Adrenal gland (tissue), 19 donors: ENCODE measurements at regions of chr15 and their contacts with region 1.

Region 1: GRCh38 chr15:64681424-64682024 is 93.9 kb downstream of the RBPMS2 start:
- DNase-seq: peak; percentile 50 to 80 (median 65)
- H3K4me3 ChIP-seq: no peak overlapping the region
- H3K27ac ChIP-seq: no peak overlapping the region
- H3K4me1 ChIP-seq: no peaks in the 10 kb centered on the region
- H3K27me3 ChIP-seq: no peaks in the 10 kb centered on the region
- CTCF ChIP-seq: peak; percentile 60 to 96 (median 86)
- POLR2A ChIP-seq: no peak

Region 2: DNA sequence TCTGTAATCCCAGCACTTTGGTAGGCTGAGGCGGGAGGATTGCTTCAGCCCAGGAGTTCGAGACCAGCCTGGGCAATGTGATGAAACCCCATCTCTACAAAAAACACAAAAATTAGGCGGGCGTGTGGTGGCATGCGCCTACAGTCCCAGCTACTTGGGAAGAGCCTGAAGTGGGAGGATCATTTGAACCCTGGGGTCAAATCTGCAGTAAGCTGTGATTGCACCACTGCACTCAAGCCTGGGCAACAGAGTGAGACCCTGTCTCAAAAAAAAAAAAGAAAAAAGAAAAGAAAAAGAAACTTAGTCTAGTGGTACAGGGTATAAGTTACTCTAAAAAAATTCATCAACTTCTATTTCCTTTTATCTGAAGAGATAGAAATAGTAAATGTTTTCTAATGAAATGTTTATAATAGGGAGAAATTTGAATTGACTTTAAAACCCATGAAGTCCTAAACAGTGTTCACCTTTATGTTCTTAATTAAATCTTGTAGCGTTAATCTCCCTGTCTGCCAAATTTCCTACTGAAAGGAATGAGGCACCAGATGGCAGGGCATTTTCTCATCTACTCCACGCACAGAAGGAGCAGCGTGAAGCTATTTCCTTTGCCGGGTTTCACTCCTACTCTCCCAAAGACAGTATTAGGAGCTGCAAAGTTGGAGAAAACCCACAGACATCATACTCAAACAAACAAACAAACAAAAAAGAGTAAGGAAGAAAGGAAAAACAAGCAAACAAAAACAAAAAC is 302.1 kb before region 1 on chr15:
- intact Hi-C with region 1: no loop called
- DNase-seq: no peak
- H3K4me3 ChIP-seq: no peak overlapping the region
- H3K27ac ChIP-seq: no peak overlapping the region
- H3K4me1 ChIP-seq: peaks cover 0 to 10% of the 10 kb centered on the region in 2 donors
- H3K27me3 ChIP-seq: no peaks in the 10 kb centered on the region
- CTCF ChIP-seq: no peak
- POLR2A ChIP-seq: no peak

Region 3: GRCh38 chr15:64430000-64430735 is 251.4 kb before region 1 on chr15:
- intact Hi-C with region 1: loop called in 1 of 2 experiments (anchors 5 kb)
- DNase-seq: peak in 5 of 7 donors; percentile 11 to 60 (median 30)
- H3K4me3 ChIP-seq: no peak overlapping the region
- H3K27ac ChIP-seq: peak overlapping the region in 4 of 5 donors; percentile 38 to 56 (median 48)
- H3K4me1 ChIP-seq: peaks cover 13 to 18% of the 10 kb centered on the region in 2 donors
- H3K27me3 ChIP-seq: no peaks in the 10 kb centered on the region
- CTCF ChIP-seq: no peak
- POLR2A ChIP-seq: no peak

Region 4: DNA sequence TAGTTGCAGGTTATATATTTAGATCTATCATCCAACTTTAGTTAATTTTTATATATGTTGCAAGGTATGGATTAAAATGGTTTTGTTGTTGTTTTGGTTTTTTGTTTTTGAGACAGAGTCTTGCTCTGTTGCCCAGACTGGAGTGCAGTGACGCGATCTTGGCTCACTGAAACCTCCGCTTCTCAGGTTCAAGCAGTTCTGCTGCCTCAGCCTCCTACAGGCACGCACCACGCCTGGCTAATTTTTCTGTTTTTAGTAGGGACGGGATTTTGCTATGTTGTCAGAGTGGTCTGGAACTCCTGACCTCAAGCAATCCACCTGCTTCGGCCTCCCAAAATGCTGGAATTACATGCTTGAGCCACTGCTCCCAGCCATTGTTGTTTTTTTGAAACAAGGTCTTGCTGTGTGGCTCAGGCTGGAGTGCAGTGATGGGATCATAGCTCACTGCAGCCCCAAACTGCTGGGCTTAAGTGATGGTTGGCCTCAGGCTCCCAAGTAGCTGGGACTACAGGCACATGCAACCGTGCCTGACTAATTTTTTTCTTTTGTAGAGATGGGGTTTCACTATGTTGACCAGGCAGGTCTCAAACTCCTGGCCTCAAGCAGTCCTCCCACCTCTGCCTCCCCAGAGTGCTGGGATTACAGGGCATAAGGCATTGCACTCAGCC is 129.1 kb before region 1 on chr15:
- intact Hi-C with region 1: no loop called
- DNase-seq: no peak
- H3K4me3 ChIP-seq: no peak overlapping the region
- H3K27ac ChIP-seq: peak overlapping the region in 1 of 5 donors; percentile 14
- H3K4me1 ChIP-seq: peaks cover 12 to 34% of the 10 kb centered on the region in 2 donors
- H3K27me3 ChIP-seq: no peaks in the 10 kb centered on the region
- CTCF ChIP-seq: no peak
- POLR2A ChIP-seq: no peak